ENCODE measurements at regions of chrX and their contacts with region 1.

Region 1: DNA sequence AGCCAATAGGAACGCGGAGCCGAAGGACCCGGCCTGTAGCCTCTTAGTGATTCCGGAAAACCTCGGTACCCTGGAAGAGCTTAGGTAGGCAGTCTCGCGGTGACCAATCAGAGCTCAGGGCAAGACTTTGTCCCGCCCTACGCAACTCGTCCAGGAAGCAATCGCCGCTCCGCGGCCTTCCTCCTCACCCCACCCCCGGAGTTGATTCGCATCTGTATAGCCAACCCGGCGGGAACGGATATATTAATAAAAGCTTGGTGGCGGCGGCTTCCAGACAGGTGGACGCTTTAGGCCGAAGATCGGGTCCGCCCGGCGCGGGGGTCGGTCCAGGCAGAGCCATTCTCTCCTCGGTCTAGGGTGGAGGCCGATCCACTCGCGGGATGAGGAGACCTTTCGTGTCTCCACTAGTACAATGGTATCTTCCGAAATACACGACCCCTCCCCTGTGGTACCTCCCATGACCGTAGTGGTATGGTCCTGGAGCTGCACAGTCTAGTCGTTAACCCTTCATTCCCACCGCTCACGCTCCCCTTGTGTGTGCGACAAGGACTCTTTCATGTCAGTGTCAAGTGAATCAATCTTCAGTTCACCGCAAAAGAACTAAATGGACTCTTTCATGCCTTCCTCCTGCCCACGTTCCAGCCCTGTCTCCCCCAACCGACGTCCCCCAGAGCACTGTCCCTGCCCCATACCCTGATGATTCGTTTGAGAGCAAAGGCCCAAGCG is 24.2 kb upstream of the GLOD5 start:
- DNase-seq: peak; percentile 85 to 93 (median 93)
- H3K4me3 ChIP-seq: peak overlapping the region; percentile 69 to 73
- H3K4me3 Mint-ChIP-seq: peak overlapping the region; percentile 81 to 94 (median 90)
- H3K27ac ChIP-seq: peak overlapping the region; percentile 68
- H3K27ac Mint-ChIP-seq: peak overlapping the region; percentile 89 to 98 (median 96)
- H3K4me1 ChIP-seq: peaks cover 20% of the 10 kb centered on the region
- H3K4me1 Mint-ChIP-seq: peaks cover 9 to 27% (median 17%) of the 10 kb centered on the region in 4 donors
- H3K27me3 ChIP-seq: no peaks in the 10 kb centered on the region
- H3K27me3 Mint-ChIP-seq: no peaks in the 10 kb centered on the region

Region 2: DNA sequence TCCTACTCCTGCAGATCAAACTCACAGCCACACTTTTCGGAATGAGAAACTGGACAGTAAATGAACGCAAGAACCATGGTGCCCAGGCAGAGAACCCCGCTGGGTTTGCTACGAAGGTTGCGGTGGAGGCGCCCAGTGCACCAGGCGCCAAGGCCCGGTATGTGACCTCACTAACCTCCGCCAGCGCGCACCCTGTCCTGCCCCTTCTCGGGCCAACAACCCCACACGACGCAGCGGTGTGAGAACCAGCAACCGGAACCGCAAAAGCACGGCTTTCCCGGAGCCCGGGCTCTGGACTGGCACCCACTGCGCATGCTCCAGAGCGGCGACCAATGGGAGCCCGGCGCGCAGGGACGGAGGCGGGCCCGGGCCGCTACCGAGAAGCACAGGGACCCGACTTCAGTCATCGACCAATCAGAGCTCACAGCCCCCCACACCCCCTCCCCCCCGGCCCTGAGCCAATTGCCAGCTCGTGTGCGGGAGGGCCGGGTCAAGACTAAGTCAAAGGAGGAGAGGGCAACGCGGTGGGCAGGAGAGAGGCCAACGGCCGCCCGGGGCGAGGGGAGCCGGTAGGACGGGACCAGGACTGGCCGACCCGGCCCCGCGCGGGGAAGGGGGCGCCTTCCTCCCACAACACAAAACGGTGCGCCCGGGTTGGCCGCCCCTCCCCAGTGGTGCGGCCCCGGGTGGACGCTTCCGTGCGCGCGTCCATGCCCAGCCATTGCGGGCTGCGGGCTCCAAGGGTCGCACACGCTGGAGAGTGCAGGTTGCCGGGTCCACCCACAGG is 61.1 kb before region 1 on chrX:
- CTCF ChIA-PET with region 1: no interaction called
- POLR2A ChIA-PET with region 1: interaction called, 11 read pairs
- intact Hi-C with region 1: loop called (anchors 1 kb)
- DNase-seq: peak; percentile 87 to 88 (median 88)
- H3K4me3 ChIP-seq: peak overlapping the region; percentile 36 to 69
- H3K4me3 Mint-ChIP-seq: peak overlapping the region; percentile 89 to 93 (median 92)
- H3K27ac ChIP-seq: peak overlapping the region; percentile 78
- H3K27ac Mint-ChIP-seq: peak overlapping the region; percentile 77 to 96 (median 94)
- H3K4me1 ChIP-seq: peaks cover 21% of the 10 kb centered on the region
- H3K4me1 Mint-ChIP-seq: peaks cover 8 to 25% (median 14%) of the 10 kb centered on the region in 4 donors
- H3K27me3 ChIP-seq: no peaks in the 10 kb centered on the region
- H3K27me3 Mint-ChIP-seq: no peaks in the 10 kb centered on the region

Region 3: GRCh38 chrX:48689208-48689920 is 48.0 kb before region 1 on chrX:
- CTCF ChIA-PET with region 1: no interaction called
- POLR2A ChIA-PET with region 1: interaction called, 34 read pairs
- intact Hi-C with region 1: no loop called
- DNase-seq: no peak
- H3K4me3 ChIP-seq: no peak overlapping the region
- H3K4me3 Mint-ChIP-seq: no peak overlapping the region
- H3K27ac ChIP-seq: no peak overlapping the region
- H3K27ac Mint-ChIP-seq: no peak overlapping the region
- H3K4me1 ChIP-seq: peaks cover 36% of the 10 kb centered on the region
- H3K4me1 Mint-ChIP-seq: peaks cover 22 to 35% (median 28%) of the 10 kb centered on the region in 4 donors
- H3K27me3 ChIP-seq: no peaks in the 10 kb centered on the region
- H3K27me3 Mint-ChIP-seq: no peaks in the 10 kb centered on the region

Region 4: GRCh38 chrX:48715072-48715471 is 22.3 kb before region 1 on chrX:
- CTCF ChIA-PET with region 1: interaction called, 6 read pairs
- POLR2A ChIA-PET with region 1: interaction called, 82 read pairs
- intact Hi-C with region 1: loop called (anchors 1 kb)
- DNase-seq: no peak
- H3K4me3 ChIP-seq: no peak overlapping the region
- H3K4me3 Mint-ChIP-seq: peak overlapping the region; percentile 2 to 75 (median 47)
- H3K27ac ChIP-seq: peak overlapping the region; percentile 47
- H3K27ac Mint-ChIP-seq: peak overlapping the region; percentile 83 to 97 (median 95)
- H3K4me1 ChIP-seq: peaks cover 90% of the 10 kb centered on the region
- H3K4me1 Mint-ChIP-seq: peaks cover 76 to 85% (median 80%) of the 10 kb centered on the region in 4 donors
- H3K27me3 ChIP-seq: no peaks in the 10 kb centered on the region
- H3K27me3 Mint-ChIP-seq: no peaks in the 10 kb centered on the region

Region 5: GRCh38 chrX:48726596-48726995 is 10.8 kb before region 1 on chrX:
- CTCF ChIA-PET with region 1: no interaction called
- POLR2A ChIA-PET with region 1: interaction called, 16 read pairs
- intact Hi-C with region 1: no loop called
- DNase-seq: peak in 3 of 5 donors; percentile 20 to 41 (median 20)
- H3K4me3 ChIP-seq: no peak overlapping the region
- H3K4me3 Mint-ChIP-seq: peak overlapping the region in 4 of 8 donors; percentile 10 to 59 (median 24)
- H3K27ac ChIP-seq: no peak overlapping the region
- H3K27ac Mint-ChIP-seq: peak overlapping the region in 6 of 7 donors; percentile 23 to 76 (median 29)
- H3K4me1 ChIP-seq: peaks cover 46% of the 10 kb centered on the region
- H3K4me1 Mint-ChIP-seq: peaks cover 26 to 39% (median 36%) of the 10 kb centered on the region in 4 donors
- H3K27me3 ChIP-seq: no peaks in the 10 kb centered on the region
- H3K27me3 Mint-ChIP-seq: no peaks in the 10 kb centered on the region

Region 6: GRCh38 chrX:48897621-48898306 is 160.4 kb after region 1 on chrX and contains the starts of genes PQBP1 and TIMM17B:
- CTCF ChIA-PET with region 1: no interaction called
- POLR2A ChIA-PET with region 1: interaction called, 12 read pairs
- intact Hi-C with region 1: no loop called
- DNase-seq: peak; percentile 88 to 93 (median 92)
- H3K4me3 ChIP-seq: peak within 1 kb of the TSS; percentile 78 to 92
- H3K4me3 Mint-ChIP-seq: peak within 1 kb of the TSS; percentile 86 to 96 (median 92)
- H3K27ac ChIP-seq: peak within 1 kb of the TSS; percentile 93
- H3K27ac Mint-ChIP-seq: peak within 1 kb of the TSS; percentile 88 to 99 (median 96)
- H3K4me1 ChIP-seq: peaks cover 24% of the 10 kb centered on the region
- H3K4me1 Mint-ChIP-seq: peaks cover 4 to 34% (median 17%) of the 10 kb centered on the region in 4 donors
- H3K27me3 ChIP-seq: no peaks in the 10 kb centered on the region
- H3K27me3 Mint-ChIP-seq: no peaks in the 10 kb centered on the region
- total RNA-seq, gene PQBP1: 59.6 to 64.4 TPM
- total RNA-seq, gene TIMM17B: 42.6 to 46.2 TPM

Region 7: GRCh38 chrX:49792376-49792775 is 1055.0 kb after region 1 on chrX:
- CTCF ChIA-PET with region 1: no interaction called
- POLR2A ChIA-PET with region 1: no interaction called
- intact Hi-C with region 1: no loop called
- DNase-seq: no peak
- H3K4me3 ChIP-seq: no peak overlapping the region
- H3K4me3 Mint-ChIP-seq: no peak overlapping the region
- H3K27ac ChIP-seq: no peak overlapping the region
- H3K27ac Mint-ChIP-seq: no peak overlapping the region
- H3K4me1 ChIP-seq: no peaks in the 10 kb centered on the region
- H3K4me1 Mint-ChIP-seq: no peaks in the 10 kb centered on the region
- H3K27me3 ChIP-seq: no peaks in the 10 kb centered on the region
- H3K27me3 Mint-ChIP-seq: peaks cover 2 to 6% of the 10 kb centered on the region in 2 donors

Measured in CD4-positive, alpha-beta memory T cell (primary cell).